Posterior vena cava (tissue), 2 donors: ENCODE measurements at regions of chr19 and their contacts with region 1.

Region 1: DNA sequence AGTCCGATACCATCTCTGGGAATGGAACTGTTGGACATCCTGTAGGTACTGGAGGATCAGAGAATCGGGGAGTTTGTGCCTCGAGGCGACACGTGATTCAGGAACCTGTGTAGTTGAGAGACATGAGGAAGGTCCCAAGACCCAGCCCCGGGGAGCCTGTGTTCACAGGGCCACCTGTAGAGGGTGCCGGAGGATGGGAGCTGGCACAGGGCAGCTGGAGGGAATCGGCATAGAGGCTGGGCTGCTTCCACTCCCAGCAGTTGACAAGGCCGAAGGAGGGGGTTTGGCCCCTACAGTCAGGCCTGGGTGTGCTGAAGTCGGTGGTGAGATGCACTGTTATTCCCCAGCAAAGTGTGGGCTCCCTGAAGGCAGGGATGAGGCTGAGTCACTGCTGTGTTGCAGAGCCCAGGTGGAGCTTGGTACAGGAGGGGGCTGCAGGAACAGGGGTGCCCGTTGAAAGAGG is 2.5 kb upstream of the ISYNA1 start:
- DNase-seq: no peak

Region 2: DNA sequence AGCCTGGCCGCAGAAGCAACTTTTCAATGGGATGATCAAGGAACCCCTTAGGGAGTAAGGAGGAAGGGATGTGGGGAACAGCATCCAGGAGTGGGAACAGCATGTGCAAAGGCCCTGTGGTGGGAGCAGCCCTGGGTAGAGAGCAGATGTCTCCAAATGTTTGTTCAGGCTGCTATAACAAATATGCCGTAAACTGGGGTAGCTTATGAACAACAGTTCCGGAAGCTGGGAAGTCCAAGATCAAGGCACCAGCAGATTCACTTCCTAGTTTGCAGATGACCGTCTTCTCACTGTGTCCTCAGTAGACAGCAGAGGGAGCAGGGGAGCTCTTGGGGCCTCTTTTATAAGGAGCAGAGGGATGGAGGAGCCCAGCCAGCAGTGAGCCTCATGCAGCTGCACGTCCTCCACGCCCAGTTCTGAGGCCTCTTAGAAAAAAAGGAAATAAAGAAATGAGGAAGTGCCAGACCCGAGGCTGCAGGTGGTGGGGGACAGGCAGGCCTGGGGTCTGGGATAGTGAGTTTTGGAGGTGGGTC is 38.8 kb before region 1 on chr19:
- intact Hi-C with region 1: no loop called
- DNase-seq: peak; percentile 92

Region 3: DNA sequence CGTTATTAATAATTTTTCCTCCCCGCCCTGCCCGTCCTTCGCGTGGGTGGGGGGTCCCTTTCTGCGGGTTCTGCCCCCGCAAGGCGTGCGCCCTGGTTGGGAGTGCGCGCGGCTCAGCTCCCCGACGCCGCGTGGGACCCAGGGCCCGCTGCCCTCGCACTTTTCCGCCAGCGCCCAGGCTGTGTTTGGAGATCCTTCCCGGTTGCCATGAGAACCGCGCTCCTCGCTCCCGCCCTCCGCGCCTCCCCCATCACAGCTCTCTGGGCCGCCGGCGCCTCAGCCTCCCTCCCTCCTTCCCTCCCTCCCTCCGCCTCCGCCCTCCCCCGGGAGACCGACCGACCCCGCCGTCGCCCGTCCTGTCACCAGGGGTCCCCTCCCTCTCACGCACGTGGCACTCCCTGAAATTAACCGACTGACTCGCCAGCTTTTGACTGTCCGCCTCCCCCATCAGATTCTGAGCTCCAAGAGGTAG is 23.6 kb before region 1 on chr19:
- intact Hi-C with region 1: no loop called
- DNase-seq: peak; percentile 98

Region 4: GRCh38 chr19:18588611-18589379 is 148.3 kb after region 1 on chr19 and contains the start of gene REX1BD:
- intact Hi-C with region 1: loop called in 1 of 2 experiments (anchors 10 kb)
- DNase-seq: peak; percentile 97
- total RNA-seq, gene REX1BD: 38.0 to 48.1 TPM